Activated T-helper 2 cell treated with anti-CD3 and anti-CD28 coated beads, Interferon-gamma antibody, Interleukin-2, Interleukin-4, amounts not matched to agents 10 μg/mL and 5 μg/mL and 100 μg/mL, durations not matched to agents 14 hours and 24 hours and 36 hours (primary cell): ENCODE measurements at regions of chr13 and their contacts with region 1.

Region 1: DNA sequence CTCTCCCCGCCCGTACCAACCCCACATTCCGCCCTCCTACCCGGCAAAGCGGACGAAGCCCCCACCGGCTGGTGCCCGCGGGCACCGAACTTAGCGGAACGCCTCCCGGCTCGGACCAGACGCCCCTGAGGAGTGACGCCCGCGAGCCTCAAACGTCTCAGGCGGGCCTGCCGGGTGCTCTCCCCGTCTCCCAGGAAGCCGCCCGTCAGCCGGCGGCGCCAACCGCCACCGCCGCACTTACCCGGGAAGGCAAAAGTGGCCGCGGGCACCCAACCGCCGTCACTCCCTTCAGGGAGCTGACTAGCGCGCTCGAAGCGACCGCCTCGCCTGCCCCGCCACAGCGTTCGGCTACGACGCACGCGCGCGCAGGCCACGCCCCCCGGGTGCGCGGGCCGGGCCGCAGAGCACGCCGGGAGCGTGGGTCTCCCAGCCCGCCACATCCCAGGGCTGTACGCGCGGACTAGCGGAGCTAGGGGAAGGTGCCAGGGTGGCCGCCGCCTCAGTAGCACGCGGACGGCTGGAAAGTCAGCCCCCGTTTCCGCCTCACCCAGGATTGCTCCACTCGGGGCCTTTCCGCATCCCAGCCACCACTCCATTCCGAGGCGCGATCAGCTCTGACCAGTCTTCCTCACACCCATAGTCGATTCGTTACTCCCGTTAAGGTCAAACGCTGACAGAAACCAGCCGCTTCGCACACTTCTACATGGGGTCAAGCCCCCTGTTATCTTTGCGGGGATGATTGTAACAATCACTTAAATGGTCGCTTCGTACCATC is at the start of gene TEX30:
- DNase-seq: peak; percentile 86
- H3K4me3 Mint-ChIP-seq: peak within 1 kb of the TSS; percentile 95
- H3K27ac Mint-ChIP-seq: peak within 1 kb of the TSS; percentile 93
- H3K4me1 Mint-ChIP-seq: peaks cover 53% of the 10 kb centered on the region
- H3K27me3 Mint-ChIP-seq: no peaks in the 10 kb centered on the region
- total RNA-seq, gene TEX30: 54.8 and 58.9 TPM in 2 replicates

Region 2: GRCh38 chr13:101773062-101773461 is 1000.6 kb before region 1 on chr13:
- intact Hi-C with region 1: no loop called
- DNase-seq: no peak
- H3K4me3 Mint-ChIP-seq: no peak overlapping the region
- H3K27ac Mint-ChIP-seq: no peak overlapping the region
- H3K4me1 Mint-ChIP-seq: no peaks in the 10 kb centered on the region
- H3K27me3 Mint-ChIP-seq: no peaks in the 10 kb centered on the region

Region 3: DNA sequence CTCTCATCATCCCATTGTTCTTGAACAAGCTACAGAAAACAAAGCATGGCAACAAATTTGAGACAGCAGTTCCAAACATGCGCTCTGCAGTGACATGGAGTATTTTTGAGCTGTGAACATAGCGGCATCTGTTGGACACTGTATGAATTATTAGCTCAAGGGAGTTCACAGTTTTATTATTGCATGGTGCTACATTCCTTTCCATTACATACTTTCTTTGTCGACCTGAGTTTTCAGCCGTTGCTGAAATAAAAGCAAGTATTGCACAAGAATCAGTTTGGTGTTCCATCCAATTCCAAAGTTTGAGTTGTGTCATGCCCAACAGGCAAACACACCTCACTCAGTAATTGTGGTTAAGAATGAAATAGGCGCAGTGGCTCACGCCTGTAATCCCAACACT is 48.7 kb before region 1 on chr13:
- intact Hi-C with region 1: loop called (anchors 5 kb)
- DNase-seq: no peak
- H3K4me3 Mint-ChIP-seq: no peak overlapping the region
- H3K27ac Mint-ChIP-seq: no peak overlapping the region
- H3K4me1 Mint-ChIP-seq: peaks cover 8% of the 10 kb centered on the region
- H3K27me3 Mint-ChIP-seq: peaks cover 27% of the 10 kb centered on the region

Region 4: DNA sequence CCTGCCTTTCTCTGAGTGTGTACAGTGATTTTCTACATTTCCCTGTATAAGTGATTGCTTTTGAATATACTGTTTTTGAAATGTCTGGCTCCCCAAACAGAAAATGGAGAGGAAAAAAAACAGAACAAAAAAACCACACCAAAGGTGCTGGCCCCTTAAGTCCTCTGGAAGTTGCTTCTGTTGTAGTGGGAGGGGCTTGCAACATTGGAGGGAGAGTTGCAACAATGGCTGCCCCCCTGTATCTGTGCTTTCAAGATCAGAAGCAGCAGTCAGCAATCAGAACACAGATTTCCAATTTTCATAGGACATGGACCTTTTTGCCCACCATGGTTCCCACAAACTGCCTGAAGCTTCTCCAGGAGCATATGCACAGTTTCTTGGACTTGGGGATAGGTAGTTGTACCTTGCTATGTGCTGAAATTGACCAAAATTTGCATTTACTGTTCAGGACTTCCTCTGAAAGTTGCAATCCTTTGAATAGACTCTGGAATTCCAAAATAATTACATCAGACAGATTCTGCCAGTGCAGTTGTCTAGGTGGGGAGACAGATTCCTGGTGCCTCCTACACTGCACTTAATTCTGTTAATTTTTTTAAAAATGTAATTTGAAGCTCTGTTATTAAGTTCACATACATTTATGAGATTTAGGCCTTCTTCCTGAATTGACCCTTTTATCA is 39.1 kb after region 1 on chr13:
- intact Hi-C with region 1: loop called (anchors 5 kb)
- DNase-seq: no peak
- H3K4me3 Mint-ChIP-seq: no peak overlapping the region
- H3K27ac Mint-ChIP-seq: no peak overlapping the region
- H3K4me1 Mint-ChIP-seq: peaks cover 26% of the 10 kb centered on the region
- H3K27me3 Mint-ChIP-seq: no peaks in the 10 kb centered on the region

Region 5: DNA sequence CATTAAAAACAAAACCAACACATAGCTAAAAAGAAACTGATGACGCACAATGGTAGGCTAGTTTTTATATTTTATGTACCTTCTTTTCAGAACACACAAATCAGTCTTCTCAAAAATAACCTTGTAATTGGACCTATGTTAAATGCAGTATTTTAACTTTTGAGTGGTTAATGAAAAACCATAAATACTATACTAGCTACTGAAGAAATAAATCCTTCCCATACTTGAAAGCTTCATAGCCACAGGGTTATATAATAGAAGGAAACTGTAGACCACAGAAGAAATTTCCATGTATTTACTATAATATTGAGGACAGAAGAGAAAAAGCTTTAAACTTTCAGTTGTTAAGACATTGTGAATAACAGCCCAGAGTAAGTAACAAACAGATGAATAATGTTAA is 1386.9 kb after region 1 on chr13:
- intact Hi-C with region 1: no loop called
- DNase-seq: no peak
- H3K4me3 Mint-ChIP-seq: no peak overlapping the region
- H3K27ac Mint-ChIP-seq: no peak overlapping the region
- H3K4me1 Mint-ChIP-seq: no peaks in the 10 kb centered on the region
- H3K27me3 Mint-ChIP-seq: no peaks in the 10 kb centered on the region